Activated T-helper 1 cell treated with anti-CD3 and anti-CD28 coated beads, Interleukin-12 subunit alpha, Interleukin-12 subunit beta, Interleukin-2, Interleukin-4 antibody, amounts not matched to agents 30 ng/mL and 10 ng/mL and 1 ng/mL, durations not matched to agents 14 hours and 24 hours and 36 hours (primary cell): ENCODE measurements at regions of chr2 and their contacts with region 1.

Region 1: GRCh38 chr2:231713730-231714430 is 5.6 kb downstream of the PTMA start:
- DNase-seq: peak; percentile 78
- H3K4me3 Mint-ChIP-seq: peak overlapping the region; percentile 75
- H3K27ac Mint-ChIP-seq: peak overlapping the region; percentile 93
- H3K4me1 Mint-ChIP-seq: peaks cover 26% of the 10 kb centered on the region
- H3K27me3 Mint-ChIP-seq: no peaks in the 10 kb centered on the region

Region 2: GRCh38 chr2:231648587-231649174 is 65.2 kb before region 1 on chr2:
- intact Hi-C with region 1: loop called (anchors 1 kb)
- DNase-seq: peak; percentile 54
- H3K4me3 Mint-ChIP-seq: no peak overlapping the region
- H3K27ac Mint-ChIP-seq: no peak overlapping the region
- H3K4me1 Mint-ChIP-seq: peaks cover 29% of the 10 kb centered on the region
- H3K27me3 Mint-ChIP-seq: no peaks in the 10 kb centered on the region